ENCODE measurements at regions of chr12 and their contacts with region 1.

Region 1: DNA sequence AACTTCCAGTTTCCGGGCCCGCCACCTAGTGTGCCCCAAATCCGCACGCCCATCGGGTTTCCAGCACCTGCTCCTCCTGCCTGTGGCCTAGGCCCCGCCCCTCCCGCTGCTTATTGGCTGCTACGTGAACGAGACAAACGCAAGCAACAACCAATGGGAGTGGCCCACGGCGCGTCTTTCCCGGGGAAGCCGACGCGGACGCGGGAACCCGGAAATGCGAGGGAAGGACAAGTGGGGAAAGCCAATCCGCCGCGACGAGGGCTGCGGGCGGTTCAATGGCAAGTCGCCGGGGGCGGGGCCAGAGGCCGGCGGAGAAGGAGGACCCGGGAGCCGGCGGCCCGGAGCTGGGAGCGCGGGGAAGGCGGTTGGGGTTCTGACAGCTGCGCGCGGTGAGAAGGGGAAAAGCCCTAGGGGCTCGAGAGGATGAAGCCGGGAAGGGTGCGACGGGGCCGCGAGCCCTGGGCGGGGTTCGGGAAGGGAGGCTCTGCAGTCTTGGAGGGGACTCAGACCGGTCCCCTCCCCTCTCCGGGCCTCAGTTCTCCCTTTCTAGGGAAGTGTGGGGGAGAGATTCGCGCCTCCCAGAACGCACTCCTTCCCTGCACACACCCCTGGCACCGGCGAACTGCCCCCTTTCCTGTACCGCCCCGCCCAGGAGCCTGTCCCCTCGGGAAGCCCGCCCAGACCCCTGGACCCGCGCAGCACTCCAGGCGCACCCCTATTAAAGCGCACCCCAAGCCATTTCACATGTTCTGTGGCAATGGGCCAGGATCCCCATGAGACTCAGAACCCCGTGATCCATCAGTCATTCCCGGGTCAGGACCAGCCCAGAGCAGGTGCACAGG is at the start of gene FICD:
- DNase-seq: peak; percentile 99 to 100 (median 99)
- H3K4me3 ChIP-seq: peak within 1 kb of the TSS; percentile 92
- H3K27ac ChIP-seq: no peak within 1 kb of the TSS
- H3K4me1 ChIP-seq: no peaks in the 10 kb centered on the region
- H3K27me3 ChIP-seq: no peaks in the 10 kb centered on the region
- CTCF ChIP-seq: no peak
- EP300 ChIP-seq: no peak
- POLR2A ChIP-seq: no peak
- total RNA-seq, gene FICD: 3.9 to 12.7 (median 7.6) TPM

Region 2: DNA sequence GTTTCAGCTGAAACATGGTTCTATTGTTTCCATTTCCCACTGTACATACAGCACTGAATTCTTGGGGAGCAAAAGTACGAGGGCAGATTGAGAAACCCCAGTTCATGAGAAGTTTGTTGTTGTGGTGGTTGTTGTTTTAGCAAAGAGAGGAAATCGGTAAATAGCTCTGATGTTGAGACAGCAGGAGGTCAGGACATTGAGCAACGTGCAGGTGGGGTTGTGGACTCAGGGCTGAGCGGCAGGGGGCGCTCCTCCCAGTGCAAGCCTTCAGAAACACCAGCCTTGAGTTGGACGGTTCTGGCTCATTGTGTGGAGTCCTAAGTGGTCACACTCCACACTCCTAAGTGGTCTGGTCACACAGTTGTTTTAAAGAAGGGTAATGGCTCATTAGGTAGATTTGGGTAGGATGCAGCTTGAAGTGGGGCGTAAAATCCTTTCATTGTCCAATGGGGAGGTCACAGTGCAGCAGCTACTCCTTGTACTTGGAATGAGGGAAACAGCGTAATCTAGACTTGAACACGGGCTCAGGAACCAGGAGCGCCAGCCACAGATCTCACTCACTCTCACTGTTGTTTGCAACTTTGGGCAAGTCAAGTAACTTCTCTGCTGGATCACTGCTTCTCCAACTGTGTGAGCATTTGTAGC is 844.1 kb before region 1 on chr12:
- intact Hi-C with region 1: loop called in 1 of 4 experiments (anchors 10 kb)
- DNase-seq: no peak
- H3K4me3 ChIP-seq: no peak overlapping the region
- H3K27ac ChIP-seq: no peak overlapping the region
- H3K4me1 ChIP-seq: no peaks in the 10 kb centered on the region
- H3K27me3 ChIP-seq: no peaks in the 10 kb centered on the region
- CTCF ChIP-seq: no peak
- EP300 ChIP-seq: no peak
- POLR2A ChIP-seq: no peak

Region 3: GRCh38 chr12:107685360-107686248 is 829.6 kb before region 1 on chr12 and contains the start of gene PWP1:
- intact Hi-C with region 1: loop called in 1 of 4 experiments (anchors 10 kb)
- DNase-seq: peak; percentile 92 to 96 (median 95)
- H3K4me3 ChIP-seq: peak within 1 kb of the TSS; percentile 93
- H3K27ac ChIP-seq: peak within 1 kb of the TSS; percentile 39 to 72
- H3K4me1 ChIP-seq: peaks cover 4% of the 10 kb centered on the region
- H3K27me3 ChIP-seq: no peaks in the 10 kb centered on the region
- CTCF ChIP-seq: no peak
- EP300 ChIP-seq: no peak
- POLR2A ChIP-seq: peak; percentile 55
- total RNA-seq, gene PWP1: 30.1 to 86.7 (median 34.4) TPM

Region 4: GRCh38 chr12:107760809-107761501 is 754.2 kb before region 1 on chr12 and contains the start of gene PRDM4:
- intact Hi-C with region 1: loop called in 1 of 4 experiments (anchors 10 kb)
- DNase-seq: peak; percentile 92 to 95 (median 94)
- H3K4me3 ChIP-seq: peak within 1 kb of the TSS; percentile 79
- H3K27ac ChIP-seq: no peak within 1 kb of the TSS
- H3K4me1 ChIP-seq: peaks cover 5% of the 10 kb centered on the region
- H3K27me3 ChIP-seq: no peaks in the 10 kb centered on the region
- CTCF ChIP-seq: peak in 1 of 3 donors; percentile 38
- EP300 ChIP-seq: no peak
- POLR2A ChIP-seq: peak; percentile 67
- total RNA-seq, gene PRDM4: 14.4 to 30.3 (median 26.4) TPM

Region 5: DNA sequence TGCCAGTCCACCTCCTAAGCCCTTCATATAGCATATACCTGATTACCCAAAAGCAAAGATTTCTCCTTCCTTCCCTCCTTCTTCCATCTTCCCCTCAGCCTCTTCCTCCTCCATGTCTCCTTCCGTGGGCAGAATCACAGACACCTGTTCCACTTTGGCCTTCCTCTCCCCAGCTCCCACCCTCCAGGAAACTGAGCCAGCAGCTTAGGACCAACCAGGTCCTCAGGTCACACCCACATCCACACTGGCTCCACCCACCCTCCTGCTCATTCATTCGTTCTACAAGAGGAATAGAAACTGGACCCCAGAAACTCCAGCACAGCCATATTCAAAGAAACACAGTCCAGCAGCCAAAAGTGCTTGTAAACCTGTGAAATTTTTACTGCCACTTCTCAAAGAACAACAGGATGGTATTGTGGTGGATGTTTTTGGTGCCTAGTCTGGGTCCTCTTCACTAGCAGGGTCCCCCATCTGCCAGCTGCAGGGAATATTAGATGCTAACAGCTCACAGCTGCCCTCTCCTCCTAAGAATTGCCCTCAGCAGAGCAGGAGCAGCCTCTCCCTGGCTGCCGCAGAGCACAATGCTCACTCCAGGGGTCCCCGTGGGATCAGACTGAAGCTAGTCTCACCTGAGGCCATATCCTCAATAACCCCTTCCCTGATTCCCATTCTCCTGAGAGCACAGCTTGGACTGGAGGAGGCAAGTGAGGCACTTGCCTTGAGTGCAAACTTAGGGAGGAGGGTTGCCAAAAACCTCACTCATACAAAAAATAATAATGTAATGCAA is 194.5 kb before region 1 on chr12:
- intact Hi-C with region 1: no loop called
- DNase-seq: no peak
- H3K4me3 ChIP-seq: no peak overlapping the region
- H3K27ac ChIP-seq: no peak overlapping the region
- H3K4me1 ChIP-seq: no peaks in the 10 kb centered on the region
- H3K27me3 ChIP-seq: no peaks in the 10 kb centered on the region
- CTCF ChIP-seq: no peak
- EP300 ChIP-seq: no peak
- POLR2A ChIP-seq: no peak

Region 6: DNA sequence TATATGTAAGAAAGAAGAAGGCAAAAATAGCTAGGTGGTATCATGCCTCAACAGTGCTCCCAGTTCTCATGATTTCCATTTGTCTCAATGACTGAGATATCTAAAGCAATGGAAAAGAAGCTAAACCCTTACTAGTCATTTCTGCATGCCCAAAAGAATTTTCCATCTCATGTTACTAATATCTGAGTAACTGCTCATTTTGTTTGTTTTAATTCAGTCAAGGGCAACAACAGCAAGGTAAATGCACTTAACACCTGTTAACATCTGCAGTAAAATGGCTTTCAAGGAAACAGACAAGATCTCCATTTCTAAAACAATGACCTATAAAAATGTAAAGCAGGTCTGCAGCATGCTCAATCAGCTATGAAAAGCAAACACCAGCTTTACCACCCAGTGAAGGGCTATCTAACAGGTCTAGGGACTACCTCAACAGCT is 137.9 kb after region 1 on chr12:
- intact Hi-C with region 1: no loop called
- DNase-seq: no peak
- H3K4me3 ChIP-seq: no peak overlapping the region
- H3K27ac ChIP-seq: no peak overlapping the region
- H3K4me1 ChIP-seq: peaks cover 5% of the 10 kb centered on the region
- H3K27me3 ChIP-seq: no peaks in the 10 kb centered on the region
- CTCF ChIP-seq: no peak
- EP300 ChIP-seq: no peak
- POLR2A ChIP-seq: no peak

Region 7: GRCh38 chr12:109880016-109880931 is 1365.1 kb after region 1 on chr12 and contains the start of gene GLTP:
- intact Hi-C with region 1: no loop called
- DNase-seq: peak; percentile 76 to 91 (median 84)
- H3K4me3 ChIP-seq: peak within 1 kb of the TSS; percentile 68
- H3K27ac ChIP-seq: peak within 1 kb of the TSS in 1 of 2 donors; percentile 63
- H3K4me1 ChIP-seq: peaks cover 4% of the 10 kb centered on the region
- H3K27me3 ChIP-seq: no peaks in the 10 kb centered on the region
- CTCF ChIP-seq: peak in 2 of 3 donors; percentile 91 to 94
- EP300 ChIP-seq: no peak
- POLR2A ChIP-seq: peak; percentile 60
- total RNA-seq, gene GLTP: 15.5 to 36.7 (median 26.3) TPM